ENCODE measurements at regions of chr18 and their contacts with region 1.

Region 1: DNA sequence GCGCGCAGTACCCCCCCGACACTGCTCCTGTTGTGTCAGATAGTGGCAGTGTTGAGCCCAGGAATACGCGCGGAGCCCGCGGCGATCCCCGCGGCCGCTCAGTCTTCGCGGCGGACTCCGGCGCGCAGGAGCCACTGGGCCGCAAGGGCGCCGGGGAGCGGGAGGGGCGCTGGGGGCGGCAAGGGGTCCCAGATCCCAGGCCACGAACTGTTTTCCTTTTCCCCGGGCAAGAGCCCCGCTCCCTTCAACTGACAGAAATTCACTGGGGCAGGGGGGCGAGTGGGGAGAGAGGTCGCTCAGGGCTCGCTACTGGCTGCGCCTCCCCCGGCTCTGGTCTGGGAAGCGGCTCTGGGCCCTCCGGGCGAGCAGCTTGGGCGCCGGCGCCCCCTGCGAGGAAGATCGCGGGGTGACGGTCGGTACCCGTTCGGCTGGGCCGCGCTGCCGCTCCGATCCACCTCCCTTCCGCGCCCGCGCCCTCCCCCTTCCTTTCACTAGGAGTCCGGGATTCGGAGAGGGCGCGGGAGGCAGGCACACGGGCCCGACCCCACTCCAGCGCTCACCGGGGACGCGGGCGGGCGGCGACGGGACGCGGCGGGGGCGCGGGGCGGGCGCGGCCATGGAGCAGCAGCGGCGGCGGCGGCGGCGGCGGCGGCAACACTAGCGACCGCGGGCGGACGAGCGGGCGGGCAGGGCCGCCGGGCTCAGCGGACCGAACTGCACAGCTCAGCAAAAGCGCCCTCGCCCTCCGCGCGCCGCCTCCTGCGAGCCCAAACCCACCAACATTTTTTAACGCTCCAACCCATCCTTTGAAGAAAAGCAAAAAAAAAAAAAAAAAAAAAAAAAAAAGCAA is 1.4 kb upstream of the SETBP1 start:
- DNase-seq: peak; percentile 83 to 90 (median 88)
- H3K4me3 ChIP-seq: peak overlapping the region; percentile 72
- H3K27ac ChIP-seq: peak overlapping the region; percentile 91 to 94
- H3K4me1 ChIP-seq: peaks cover 6% of the 10 kb centered on the region
- H3K27me3 ChIP-seq: no peaks in the 10 kb centered on the region
- CTCF ChIP-seq: peak; percentile 61 to 72 (median 71)
- EP300 ChIP-seq: no peak
- POLR2A ChIP-seq: peak; percentile 79

Region 2: DNA sequence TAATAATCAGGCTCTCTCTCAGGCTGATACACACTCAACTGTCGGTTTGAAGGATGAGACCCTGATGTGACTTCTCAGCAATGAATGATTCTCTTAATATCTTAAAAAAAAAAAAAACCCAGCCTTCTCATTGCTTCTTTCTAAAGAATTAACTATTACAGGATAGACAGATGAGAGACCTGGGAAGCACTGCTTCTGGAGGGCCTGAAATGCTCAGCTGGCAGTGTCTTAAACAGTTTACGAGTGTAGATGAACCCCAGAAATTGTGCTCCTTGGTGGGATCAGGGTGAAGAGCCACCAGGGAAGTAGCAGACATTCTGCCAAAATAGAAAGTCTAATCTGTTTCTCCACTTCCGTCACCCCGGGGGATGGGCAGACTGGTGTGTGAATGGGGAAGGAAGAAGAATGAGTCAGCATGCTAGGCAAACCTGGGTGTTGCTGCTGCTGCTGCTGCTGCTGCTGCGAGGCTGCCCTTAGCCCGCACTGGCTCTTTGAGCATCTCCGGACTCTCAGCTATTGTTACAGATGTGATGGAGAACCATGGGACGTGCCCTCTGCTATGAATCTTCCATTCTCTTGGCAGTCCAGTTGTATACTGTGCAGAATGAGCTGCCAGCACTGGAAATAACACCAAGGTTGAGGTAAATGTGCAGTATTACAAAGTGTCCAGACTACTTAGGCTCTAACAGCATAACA is 159.8 kb after region 1 on chr18:
- intact Hi-C with region 1: loop called in 1 of 4 experiments (anchors 10 kb)
- DNase-seq: peak; percentile 56 to 67 (median 60)
- H3K4me3 ChIP-seq: no peak overlapping the region
- H3K27ac ChIP-seq: no peak overlapping the region
- H3K4me1 ChIP-seq: peaks cover 8% of the 10 kb centered on the region
- H3K27me3 ChIP-seq: no peaks in the 10 kb centered on the region
- CTCF ChIP-seq: no peak
- EP300 ChIP-seq: no peak
- POLR2A ChIP-seq: no peak

Region 3: GRCh38 chr18:45014047-45014501 is 334.8 kb after region 1 on chr18:
- intact Hi-C with region 1: loop called in 1 of 4 experiments (anchors 10 kb)
- DNase-seq: peak in 1 of 5 donors; percentile 50
- H3K4me3 ChIP-seq: no peak overlapping the region
- H3K27ac ChIP-seq: no peak overlapping the region
- H3K4me1 ChIP-seq: peaks cover 9% of the 10 kb centered on the region
- H3K27me3 ChIP-seq: no peaks in the 10 kb centered on the region
- CTCF ChIP-seq: no peak
- EP300 ChIP-seq: no peak
- POLR2A ChIP-seq: no peak

Region 4: GRCh38 chr18:45212181-45213039 is 533.1 kb after region 1 on chr18:
- intact Hi-C with region 1: loop called in 2 of 4 experiments (anchors 5 to 10 kb)
- DNase-seq: peak; percentile 75 to 89 (median 83)
- H3K4me3 ChIP-seq: no peak overlapping the region
- H3K27ac ChIP-seq: no peak overlapping the region
- H3K4me1 ChIP-seq: no peaks in the 10 kb centered on the region
- H3K27me3 ChIP-seq: no peaks in the 10 kb centered on the region
- CTCF ChIP-seq: peak; percentile 75 to 87 (median 87)
- EP300 ChIP-seq: no peak
- POLR2A ChIP-seq: peak; percentile 20

Measured in ovary (tissue), 10 donors.